Caco-2 (cell line): ENCODE measurements at regions of chr11 and their contacts with region 1.

Region 1: GRCh38 chr11:81787584-81788049 is 946.0 kb downstream of the FAM181B start:
- DNase-seq: no peak
- H3K4me3 ChIP-seq: no peak overlapping the region
- H3K4me3 Mint-ChIP-seq: no peak overlapping the region
- H3K27ac Mint-ChIP-seq: no peak overlapping the region
- H3K4me1 ChIP-seq: no peaks in the 10 kb centered on the region
- H3K4me1 Mint-ChIP-seq: no peaks in the 10 kb centered on the region
- H3K27me3 ChIP-seq: no peaks in the 10 kb centered on the region
- H3K27me3 Mint-ChIP-seq: no peaks in the 10 kb centered on the region
- CTCF ChIP-seq: peak in 1 of 2 experiments; percentile 12

Region 2: GRCh38 chr11:81744336-81745116 is 43.1 kb before region 1 on chr11:
- CTCF ChIA-PET with region 1: no interaction called
- POLR2A ChIA-PET with region 1: no interaction called
- intact Hi-C with region 1: no loop called
- DNase-seq: no peak
- H3K4me3 ChIP-seq: no peak overlapping the region
- H3K4me3 Mint-ChIP-seq: no peak overlapping the region
- H3K27ac Mint-ChIP-seq: no peak overlapping the region
- H3K4me1 ChIP-seq: no peaks in the 10 kb centered on the region
- H3K4me1 Mint-ChIP-seq: no peaks in the 10 kb centered on the region
- H3K27me3 ChIP-seq: no peaks in the 10 kb centered on the region
- H3K27me3 Mint-ChIP-seq: peaks cover 8% of the 10 kb centered on the region
- CTCF ChIP-seq: no peak

Region 3: DNA sequence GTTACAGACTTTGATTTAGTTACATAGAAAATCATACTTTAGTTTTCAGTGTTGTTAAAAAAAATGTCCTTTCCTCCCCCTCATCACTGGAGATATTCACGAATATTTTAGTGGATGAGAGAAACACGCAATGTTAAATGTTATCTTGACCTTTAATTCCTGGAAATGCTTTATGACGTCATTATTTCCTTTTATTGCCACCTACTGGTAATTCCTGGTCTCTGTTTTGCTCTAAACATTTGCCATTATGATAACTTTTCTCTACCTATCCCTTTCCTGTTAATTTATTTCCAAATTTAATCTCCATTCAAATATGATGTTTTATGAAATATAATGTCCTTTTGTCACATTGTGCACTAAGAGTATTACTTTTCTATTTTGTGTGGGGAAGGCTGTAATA is 175.4 kb after region 1 on chr11:
- CTCF ChIA-PET with region 1: no interaction called
- POLR2A ChIA-PET with region 1: no interaction called
- intact Hi-C with region 1: loop called (anchors 10 kb)
- DNase-seq: no peak
- H3K4me3 ChIP-seq: no peak overlapping the region
- H3K4me3 Mint-ChIP-seq: no peak overlapping the region
- H3K27ac Mint-ChIP-seq: no peak overlapping the region
- H3K4me1 ChIP-seq: no peaks in the 10 kb centered on the region
- H3K4me1 Mint-ChIP-seq: no peaks in the 10 kb centered on the region
- H3K27me3 ChIP-seq: no peaks in the 10 kb centered on the region
- H3K27me3 Mint-ChIP-seq: no peaks in the 10 kb centered on the region
- CTCF ChIP-seq: peak; percentile 51 to 56

Region 4: GRCh38 chr11:82038153-82038552 is 250.5 kb after region 1 on chr11:
- CTCF ChIA-PET with region 1: no interaction called
- POLR2A ChIA-PET with region 1: no interaction called
- intact Hi-C with region 1: loop called (anchors 1 kb)
- DNase-seq: no peak
- H3K4me3 ChIP-seq: no peak overlapping the region
- H3K4me3 Mint-ChIP-seq: no peak overlapping the region
- H3K27ac Mint-ChIP-seq: no peak overlapping the region
- H3K4me1 ChIP-seq: no peaks in the 10 kb centered on the region
- H3K4me1 Mint-ChIP-seq: no peaks in the 10 kb centered on the region
- H3K27me3 ChIP-seq: no peaks in the 10 kb centered on the region
- H3K27me3 Mint-ChIP-seq: peaks cover 4% of the 10 kb centered on the region
- CTCF ChIP-seq: no peak